Breast epithelium (tissue), 4 donors: ENCODE measurements at regions of chr16 and their contacts with region 1.

Region 1: GRCh38 chr16:84548971-84549844 is 44.7 kb upstream of the MEAK7 start:
- DNase-seq: no peak
- H3K4me3 ChIP-seq: peak overlapping the region in 2 of 3 donors; percentile 3 to 19
- H3K27ac ChIP-seq: peak overlapping the region; percentile 17 to 33
- H3K4me1 ChIP-seq: no peaks in the 10 kb centered on the region
- H3K27me3 ChIP-seq: peaks cover 0 to 6% of the 10 kb centered on the region in 2 donors
- CTCF ChIP-seq: no peak
- POLR2A ChIP-seq: no peak

Region 2: GRCh38 chr16:84569382-84569987 is 20.3 kb after region 1 on chr16:
- intact Hi-C with region 1: no loop called
- DNase-seq: no peak
- H3K4me3 ChIP-seq: no peak overlapping the region
- H3K27ac ChIP-seq: no peak overlapping the region
- H3K4me1 ChIP-seq: no peaks in the 10 kb centered on the region
- H3K27me3 ChIP-seq: no peaks in the 10 kb centered on the region
- CTCF ChIP-seq: no peak
- POLR2A ChIP-seq: no peak

Region 3: DNA sequence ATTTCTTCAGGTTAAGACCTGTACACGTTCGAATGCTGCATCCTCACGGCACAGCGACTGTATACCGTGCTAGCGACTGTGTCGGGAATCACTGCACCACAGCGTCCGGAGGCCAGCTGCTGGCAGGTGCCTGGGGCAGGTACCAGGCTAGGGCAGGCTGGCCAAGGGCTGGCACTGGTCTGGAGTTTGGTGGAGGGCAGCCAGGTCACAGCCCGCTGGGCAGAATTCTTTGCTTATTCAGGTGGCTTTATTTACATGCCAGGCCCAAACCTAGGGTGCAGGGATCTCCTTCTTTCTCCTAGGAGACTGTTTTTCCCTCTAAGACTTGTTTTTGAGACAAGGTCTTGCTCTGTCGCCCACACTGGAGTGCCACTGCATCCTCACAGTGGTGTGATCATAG is 30.7 kb after region 1 on chr16:
- intact Hi-C with region 1: loop called (anchors 1 kb)
- DNase-seq: no peak
- H3K4me3 ChIP-seq: no peak overlapping the region
- H3K27ac ChIP-seq: no peak overlapping the region
- H3K4me1 ChIP-seq: no peaks in the 10 kb centered on the region
- H3K27me3 ChIP-seq: no peaks in the 10 kb centered on the region
- CTCF ChIP-seq: no peak
- POLR2A ChIP-seq: no peak

Region 4: GRCh38 chr16:85556456-85557082 is 1007.4 kb after region 1 on chr16:
- intact Hi-C with region 1: no loop called
- DNase-seq: peak in 1 of 2 donors; percentile 40
- H3K4me3 ChIP-seq: peak overlapping the region; percentile 59 to 92 (median 82)
- H3K27ac ChIP-seq: peak overlapping the region; percentile 91 to 95
- H3K4me1 ChIP-seq: peaks cover 3 to 13% of the 10 kb centered on the region in 2 donors
- H3K27me3 ChIP-seq: no peaks in the 10 kb centered on the region
- CTCF ChIP-seq: no peak
- POLR2A ChIP-seq: no peak